Activated CD4-positive, alpha-beta T cell treated with anti-CD3 and anti-CD28 coated beads for 36 hours (primary cell): ENCODE measurements at regions of chr19 and their contacts with region 1.

Region 1: GRCh38 chr19:21851596-21852345 is 15.8 kb upstream of the ZNF43 start:
- DNase-seq: peak; percentile 96
- ATAC-seq: peak; percentile 98
- H3K4me3 Mint-ChIP-seq: peak overlapping the region; percentile 88
- H3K27ac Mint-ChIP-seq: peak overlapping the region; percentile 88
- H3K4me1 Mint-ChIP-seq: peaks cover 30% of the 10 kb centered on the region
- H3K27me3 Mint-ChIP-seq: no peaks in the 10 kb centered on the region

Region 2: DNA sequence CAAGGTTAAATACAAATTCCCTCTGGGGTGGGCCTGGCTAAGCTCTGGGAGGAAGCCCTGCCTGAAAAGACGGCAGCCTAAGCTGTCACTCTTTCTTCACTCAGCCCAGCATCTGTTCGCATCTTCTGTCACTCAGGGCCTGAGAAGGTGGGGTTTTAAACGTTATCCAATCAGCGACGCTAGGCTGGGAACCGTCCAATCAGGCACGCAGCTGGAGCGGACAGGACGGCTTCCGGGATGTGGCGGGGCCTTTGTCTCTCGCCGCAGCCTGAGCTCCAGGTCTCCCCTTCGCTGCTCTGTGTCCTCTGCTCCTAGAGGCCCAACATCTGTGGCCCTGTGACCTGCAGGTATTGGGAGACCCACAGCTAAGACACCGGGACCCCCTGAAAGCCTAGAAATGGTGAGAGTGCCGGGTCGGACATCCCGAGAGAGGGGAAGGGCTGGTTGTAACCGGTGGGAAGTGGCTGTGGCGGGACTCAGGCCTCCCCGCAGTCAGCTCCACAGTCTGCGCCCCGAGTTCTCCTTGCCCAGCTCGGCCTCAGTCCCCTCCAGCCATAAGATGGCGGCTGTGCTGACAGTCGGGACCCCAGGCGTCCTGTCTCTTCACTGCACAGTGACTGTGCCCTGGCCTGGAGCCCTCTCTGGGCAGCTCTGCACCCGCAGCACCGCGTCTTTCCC is 709.8 kb before region 1 on chr19 and contains the start of gene ZNF431:
- CTCF ChIA-PET with region 1: no interaction called
- POLR2A ChIA-PET with region 1: no interaction called
- intact Hi-C with region 1: loop called in 1 of 2 experiments (anchors 10 kb)
- DNase-seq: peak; percentile 94
- ATAC-seq: peak; percentile 99
- H3K4me3 Mint-ChIP-seq: peak within 1 kb of the TSS; percentile 95
- H3K27ac Mint-ChIP-seq: peak within 1 kb of the TSS; percentile 96
- H3K4me1 Mint-ChIP-seq: peaks cover 38% of the 10 kb centered on the region
- H3K27me3 Mint-ChIP-seq: no peaks in the 10 kb centered on the region
- total RNA-seq, gene ZNF431: 16.8 to 22.2 TPM

Region 3: DNA sequence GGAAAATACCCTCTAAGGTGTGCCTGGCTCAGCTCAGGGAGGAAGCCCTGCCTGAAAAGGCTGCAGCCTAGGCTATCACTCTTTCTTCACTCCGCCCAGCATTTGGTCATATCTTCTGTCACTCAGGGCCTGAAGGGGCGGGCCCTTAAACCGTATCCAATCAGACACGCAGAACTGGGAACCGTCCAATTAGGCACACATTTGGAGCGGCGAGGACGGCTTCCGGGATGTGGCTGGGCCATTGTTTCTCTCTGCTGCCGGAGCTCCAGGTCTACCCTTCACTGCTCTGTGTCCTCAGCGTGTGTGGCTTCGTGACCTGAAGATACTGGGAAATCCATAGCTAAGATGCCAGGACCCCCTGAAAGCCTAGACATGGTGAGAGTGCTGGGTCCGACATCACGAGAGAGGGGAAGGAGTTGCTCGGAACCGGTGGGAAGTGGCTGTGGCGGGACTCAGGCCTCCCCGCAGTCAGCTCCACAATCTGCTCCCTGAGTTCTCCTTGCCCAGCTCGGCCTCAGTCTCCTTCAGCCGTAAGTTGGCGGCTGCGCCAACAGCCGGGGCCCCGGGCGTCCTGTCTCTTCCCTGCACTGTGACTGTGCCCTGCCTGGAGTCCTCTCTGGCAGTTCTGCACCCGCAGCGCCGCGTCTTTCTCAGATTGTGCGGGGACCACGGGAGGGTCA is 454.7 kb before region 1 on chr19 and contains the start of gene ZNF493:
- CTCF ChIA-PET with region 1: no interaction called
- POLR2A ChIA-PET with region 1: no interaction called
- intact Hi-C with region 1: loop called in 1 of 2 experiments (anchors 2 kb)
- DNase-seq: peak; percentile 95
- ATAC-seq: peak; percentile 100
- H3K4me3 Mint-ChIP-seq: peak within 1 kb of the TSS; percentile 98
- H3K27ac Mint-ChIP-seq: peak within 1 kb of the TSS; percentile 92
- H3K4me1 Mint-ChIP-seq: peaks cover 32% of the 10 kb centered on the region
- H3K27me3 Mint-ChIP-seq: no peaks in the 10 kb centered on the region
- total RNA-seq, gene ZNF493: 11.9 to 12.8 TPM

Region 4: GRCh38 chr19:21492947-21493906 is 358.5 kb before region 1 on chr19:
- CTCF ChIA-PET with region 1: no interaction called
- POLR2A ChIA-PET with region 1: no interaction called
- intact Hi-C with region 1: no loop called
- DNase-seq: no peak
- ATAC-seq: no peak
- H3K4me3 Mint-ChIP-seq: no peak overlapping the region
- H3K27ac Mint-ChIP-seq: no peak overlapping the region
- H3K4me1 Mint-ChIP-seq: no peaks in the 10 kb centered on the region
- H3K27me3 Mint-ChIP-seq: no peaks in the 10 kb centered on the region

Region 5: DNA sequence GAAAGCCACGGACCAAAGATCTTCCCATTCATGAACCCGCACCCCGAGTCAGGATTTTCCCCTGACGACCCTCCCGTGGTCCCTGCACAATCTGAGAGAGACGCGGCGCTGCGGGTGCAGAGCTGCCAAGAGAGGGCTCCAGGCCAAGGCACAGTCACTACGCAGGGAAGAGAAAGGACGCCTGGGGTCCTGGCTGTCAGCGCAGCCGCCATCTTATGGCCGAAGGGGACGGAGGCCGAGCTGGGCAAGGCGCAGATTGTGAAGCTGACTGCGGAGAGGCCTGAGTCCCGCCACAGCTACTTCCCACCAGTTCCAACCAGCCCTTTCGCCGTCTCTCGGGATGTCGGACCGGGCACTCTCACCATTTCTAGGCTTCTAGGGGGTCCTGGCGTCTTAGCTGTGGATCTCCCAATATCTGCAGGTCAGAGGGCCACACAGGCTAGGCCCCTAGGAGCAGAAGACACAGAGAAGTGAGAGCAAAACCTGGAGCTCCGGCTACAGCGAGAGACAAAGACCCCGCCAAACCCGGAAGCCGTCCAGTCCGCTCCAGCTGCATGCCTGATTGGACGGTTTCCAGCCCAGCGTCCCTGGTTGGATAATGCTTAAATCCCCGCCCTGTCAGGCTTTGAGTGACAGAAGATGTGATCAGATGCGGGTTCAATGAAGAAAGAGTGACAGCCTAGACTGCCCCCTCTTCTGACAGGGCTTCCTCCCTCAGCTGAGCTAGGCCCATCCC is 84.5 kb before region 1 on chr19 and contains the start of gene ZNF100:
- CTCF ChIA-PET with region 1: no interaction called
- POLR2A ChIA-PET with region 1: interaction called, 18 read pairs
- intact Hi-C with region 1: loop called (anchors 1 kb)
- DNase-seq: peak; percentile 94
- ATAC-seq: peak; percentile 98
- H3K4me3 Mint-ChIP-seq: peak within 1 kb of the TSS; percentile 98
- H3K27ac Mint-ChIP-seq: peak within 1 kb of the TSS; percentile 95
- H3K4me1 Mint-ChIP-seq: peaks cover 30% of the 10 kb centered on the region
- H3K27me3 Mint-ChIP-seq: no peaks in the 10 kb centered on the region
- total RNA-seq, gene ZNF100: 24.7 to 27.0 TPM